CD4-positive, alpha-beta T cell (primary cell): ENCODE measurements at regions of chrX and their contacts with region 1.

Region 1: GRCh38 chrX:48676106-48676892 is 7.3 kb upstream of the WAS start:
- DNase-seq: peak; percentile 74 to 94 (median 86)
- ATAC-seq: peak; percentile 96
- H3K4me3 ChIP-seq: peak overlapping the region; percentile 79
- H3K4me3 Mint-ChIP-seq: peak overlapping the region; percentile 95
- H3K27ac ChIP-seq: peak overlapping the region; percentile 64
- H3K27ac Mint-ChIP-seq: peak overlapping the region; percentile 96
- H3K4me1 ChIP-seq: peaks cover 28% of the 10 kb centered on the region
- H3K4me1 Mint-ChIP-seq: peaks cover 18% of the 10 kb centered on the region
- H3K27me3 ChIP-seq: no peaks in the 10 kb centered on the region
- H3K27me3 Mint-ChIP-seq: no peaks in the 10 kb centered on the region
- CTCF ChIP-seq: no peak

Region 2: GRCh38 chrX:47900833-47901232 is 775.5 kb before region 1 on chrX:
- CTCF ChIA-PET with region 1: no interaction called
- POLR2A ChIA-PET with region 1: no interaction called
- intact Hi-C with region 1: no loop called
- DNase-seq: peak in 1 of 14 experiments; percentile 0
- ATAC-seq: no peak
- H3K4me3 ChIP-seq: no peak overlapping the region
- H3K4me3 Mint-ChIP-seq: no peak overlapping the region
- H3K27ac ChIP-seq: no peak overlapping the region
- H3K27ac Mint-ChIP-seq: no peak overlapping the region
- H3K4me1 ChIP-seq: no peaks in the 10 kb centered on the region
- H3K4me1 Mint-ChIP-seq: no peaks in the 10 kb centered on the region
- H3K27me3 ChIP-seq: no peaks in the 10 kb centered on the region
- H3K27me3 Mint-ChIP-seq: no peaks in the 10 kb centered on the region
- CTCF ChIP-seq: no peak

Region 3: DNA sequence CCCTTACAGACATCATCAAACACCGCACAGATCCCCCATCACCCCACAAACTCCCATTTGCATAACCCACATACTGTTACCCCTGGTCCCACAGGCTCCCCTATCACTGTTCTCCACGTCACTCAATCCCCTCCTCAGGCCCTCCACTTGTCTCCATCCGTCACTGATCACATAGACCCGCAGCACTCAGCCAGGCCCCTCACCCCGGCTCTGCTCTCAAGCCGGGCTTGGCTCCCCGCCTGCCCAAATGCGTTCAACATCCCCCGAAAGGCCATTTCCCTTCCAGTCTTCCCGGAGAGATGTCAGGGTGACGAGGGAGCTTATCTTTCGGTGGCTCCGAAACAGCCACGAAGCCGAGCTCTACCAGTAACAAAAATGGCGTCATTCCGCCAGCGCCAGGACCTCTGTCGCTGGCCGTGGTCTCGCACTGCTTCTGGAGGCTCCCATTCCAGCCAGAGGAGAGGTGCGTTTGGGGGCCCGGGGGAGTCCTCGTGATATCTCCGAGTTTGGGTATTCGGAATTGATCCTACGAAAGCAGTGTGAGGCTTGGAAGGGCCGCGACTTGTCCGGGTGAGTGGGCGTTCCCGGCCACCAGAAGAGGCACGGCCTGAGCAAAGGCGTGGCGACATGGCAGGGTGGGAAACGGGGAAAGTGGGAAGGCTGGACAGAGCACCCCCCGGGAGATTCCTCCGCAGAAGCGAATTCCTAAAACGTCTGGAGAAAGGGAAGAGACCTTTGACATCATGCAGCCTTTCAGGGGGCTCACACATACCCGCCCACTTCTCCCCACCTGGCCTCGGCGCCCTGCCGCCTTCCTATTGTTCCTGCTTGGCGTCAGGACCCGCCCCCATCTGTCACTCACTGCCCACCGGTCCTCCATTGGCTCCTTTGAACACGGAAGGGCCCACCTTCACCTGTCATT is 605.0 kb before region 1 on chrX and contains the start of gene ZNF630:
- CTCF ChIA-PET with region 1: no interaction called
- POLR2A ChIA-PET with region 1: no interaction called
- intact Hi-C with region 1: loop called in 1 of 2 experiments (anchors 5 kb)
- DNase-seq: peak; percentile 15 to 77 (median 51)
- ATAC-seq: peak; percentile 80
- H3K4me3 ChIP-seq: peak within 1 kb of the TSS; percentile 88
- H3K4me3 Mint-ChIP-seq: peak within 1 kb of the TSS; percentile 94
- H3K27ac ChIP-seq: peak within 1 kb of the TSS; percentile 40 to 76
- H3K27ac Mint-ChIP-seq: peak within 1 kb of the TSS; percentile 92
- H3K4me1 ChIP-seq: peaks cover 12% of the 10 kb centered on the region
- H3K4me1 Mint-ChIP-seq: peaks cover 20% of the 10 kb centered on the region
- H3K27me3 ChIP-seq: no peaks in the 10 kb centered on the region
- H3K27me3 Mint-ChIP-seq: no peaks in the 10 kb centered on the region
- CTCF ChIP-seq: no peak
- total RNA-seq, gene ZNF630: 1.2 to 1.9 TPM

Region 4: DNA sequence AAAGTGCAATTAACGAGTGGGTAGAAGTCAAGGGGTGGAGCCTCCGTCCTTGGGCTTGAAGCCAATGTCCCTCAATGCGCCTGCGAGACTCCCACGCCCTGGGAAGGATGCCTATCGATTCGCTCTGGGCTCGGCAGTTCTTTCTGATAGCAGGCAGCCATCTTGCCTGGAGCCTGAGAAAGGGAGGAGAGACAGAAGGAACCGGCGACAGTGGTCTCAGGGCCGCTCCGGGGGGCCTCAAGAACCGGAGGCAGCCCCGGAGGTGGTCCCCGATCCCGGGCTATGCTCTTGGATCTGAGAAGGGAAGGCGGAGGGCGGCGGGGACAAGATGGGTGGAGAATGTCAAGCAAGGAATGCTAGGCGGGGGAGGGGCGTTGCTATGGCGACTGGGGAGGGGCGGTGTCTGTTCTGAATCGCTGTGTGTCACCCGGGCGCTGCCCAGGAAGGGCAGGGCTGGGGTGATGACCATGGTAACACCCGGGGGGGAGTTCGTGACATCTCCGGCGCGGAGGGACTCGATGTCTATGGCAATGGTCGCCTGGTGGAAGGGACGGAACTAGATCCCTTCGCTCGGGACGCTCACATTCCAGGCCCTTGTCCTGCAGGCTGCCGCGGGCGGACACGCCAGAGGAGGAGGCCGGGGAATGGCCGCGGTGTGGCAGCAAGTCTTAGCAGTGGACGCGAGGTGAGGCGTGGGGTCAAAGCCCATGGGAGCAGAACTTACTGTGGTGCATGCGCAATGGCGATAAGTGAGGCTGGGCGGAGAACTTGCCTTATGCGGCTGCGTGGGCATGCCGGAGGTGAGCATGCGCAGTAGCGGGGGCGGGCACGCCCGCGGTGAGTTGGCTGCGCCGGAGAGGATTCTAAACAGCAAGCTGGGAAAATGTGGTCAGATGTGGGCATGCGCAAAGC is 78.7 kb before region 1 on chrX and contains the start of gene WDR13:
- CTCF ChIA-PET with region 1: no interaction called
- POLR2A ChIA-PET with region 1: no interaction called
- intact Hi-C with region 1: loop called in 1 of 2 experiments (anchors 2 kb)
- DNase-seq: peak; percentile 81 to 95 (median 90)
- ATAC-seq: peak; percentile 81
- H3K4me3 ChIP-seq: peak within 1 kb of the TSS; percentile 90
- H3K4me3 Mint-ChIP-seq: peak within 1 kb of the TSS; percentile 98
- H3K27ac ChIP-seq: peak within 1 kb of the TSS; percentile 96 to 99
- H3K27ac Mint-ChIP-seq: peak within 1 kb of the TSS; percentile 100
- H3K4me1 ChIP-seq: peaks cover 19% of the 10 kb centered on the region
- H3K4me1 Mint-ChIP-seq: peaks cover 15% of the 10 kb centered on the region
- H3K27me3 ChIP-seq: no peaks in the 10 kb centered on the region
- H3K27me3 Mint-ChIP-seq: no peaks in the 10 kb centered on the region
- CTCF ChIP-seq: no peak
- total RNA-seq, gene WDR13: 37.9 to 43.4 TPM

Region 5: GRCh38 chrX:48665991-48666390 is 10.3 kb before region 1 on chrX:
- CTCF ChIA-PET with region 1: no interaction called
- POLR2A ChIA-PET with region 1: no interaction called
- intact Hi-C with region 1: no loop called
- DNase-seq: no peak
- ATAC-seq: no peak
- H3K4me3 ChIP-seq: no peak overlapping the region
- H3K4me3 Mint-ChIP-seq: no peak overlapping the region
- H3K27ac ChIP-seq: no peak overlapping the region
- H3K27ac Mint-ChIP-seq: no peak overlapping the region
- H3K4me1 ChIP-seq: peaks cover under 1% of the 10 kb centered on the region
- H3K4me1 Mint-ChIP-seq: peaks cover 7% of the 10 kb centered on the region
- H3K27me3 ChIP-seq: no peaks in the 10 kb centered on the region
- H3K27me3 Mint-ChIP-seq: no peaks in the 10 kb centered on the region
- CTCF ChIP-seq: no peak

Region 6: DNA sequence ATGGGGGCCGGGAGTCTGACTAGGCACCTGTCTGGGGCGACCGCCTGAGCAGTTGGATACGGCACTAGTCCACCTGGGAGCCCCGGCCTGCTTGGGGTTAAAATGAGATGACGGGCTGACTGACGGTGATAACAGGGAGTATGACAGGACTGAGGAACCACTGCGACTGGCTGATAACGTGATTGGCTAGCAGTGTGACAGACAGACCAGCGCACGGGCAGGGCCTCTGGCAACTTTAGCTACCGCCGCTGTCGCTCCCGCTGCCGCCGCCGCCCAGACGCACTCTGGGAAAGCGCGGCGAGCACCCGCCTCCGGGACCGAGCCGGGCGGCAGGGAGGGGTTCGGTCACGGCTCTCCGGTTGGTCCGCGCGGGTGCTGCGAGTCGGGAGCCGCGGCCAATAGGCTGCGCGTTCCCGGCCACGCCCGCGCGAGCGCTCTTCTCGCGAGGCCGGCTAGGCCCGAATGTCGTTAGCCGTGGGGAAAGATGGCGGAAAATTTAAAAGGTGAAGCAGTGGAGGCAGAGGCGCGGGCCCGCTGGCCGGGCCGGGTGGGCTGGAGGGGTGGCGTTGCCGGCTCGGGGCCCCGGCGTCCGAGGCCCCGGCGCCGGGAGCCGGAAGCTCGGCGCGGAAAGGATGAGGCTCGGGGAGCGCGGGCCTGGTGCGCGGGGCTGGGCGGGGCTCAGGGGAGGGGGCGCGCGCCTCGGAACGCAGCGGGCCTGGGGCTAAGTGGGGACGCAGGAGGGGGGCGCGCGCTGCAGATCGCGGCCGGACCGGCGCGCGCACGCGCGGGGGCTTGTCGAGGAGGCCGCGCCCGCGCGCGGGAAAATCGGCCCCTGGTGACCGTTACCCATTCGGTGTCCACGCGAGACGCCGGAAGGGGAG is 20.2 kb after region 1 on chrX and contains the start of gene SUV39H1:
- CTCF ChIA-PET with region 1: no interaction called
- POLR2A ChIA-PET with region 1: interaction called, 11 read pairs
- intact Hi-C with region 1: no loop called
- DNase-seq: peak; percentile 66 to 95 (median 80)
- ATAC-seq: peak; percentile 93
- H3K4me3 ChIP-seq: peak within 1 kb of the TSS; percentile 65
- H3K4me3 Mint-ChIP-seq: peak within 1 kb of the TSS; percentile 98
- H3K27ac ChIP-seq: peak within 1 kb of the TSS; percentile 72 to 75
- H3K27ac Mint-ChIP-seq: peak within 1 kb of the TSS; percentile 98
- H3K4me1 ChIP-seq: peaks cover 17% of the 10 kb centered on the region
- H3K4me1 Mint-ChIP-seq: peaks cover 24% of the 10 kb centered on the region
- H3K27me3 ChIP-seq: no peaks in the 10 kb centered on the region
- H3K27me3 Mint-ChIP-seq: no peaks in the 10 kb centered on the region
- CTCF ChIP-seq: no peak
- total RNA-seq, gene SUV39H1: 7.7 to 8.4 TPM

Region 7: DNA sequence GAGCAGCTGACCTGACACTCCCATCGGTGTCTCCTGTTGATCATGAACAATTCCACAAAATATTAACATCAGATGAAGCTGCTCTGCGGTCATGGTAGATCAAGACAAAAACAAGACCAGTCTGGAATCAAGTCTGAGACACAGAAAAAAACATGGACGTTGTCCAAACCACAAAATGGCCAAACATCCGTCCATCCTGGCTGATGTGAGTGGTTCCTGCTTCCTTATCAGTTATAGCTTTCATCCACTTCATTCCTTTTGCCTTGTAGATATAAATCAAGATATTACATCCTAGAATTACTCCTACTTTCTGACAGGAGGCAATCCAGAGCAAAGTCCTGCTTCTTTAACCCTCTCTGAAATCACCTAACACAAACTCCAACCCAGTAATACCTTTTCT is 187.9 kb after region 1 on chrX:
- CTCF ChIA-PET with region 1: no interaction called
- POLR2A ChIA-PET with region 1: no interaction called
- intact Hi-C with region 1: no loop called
- DNase-seq: no peak
- ATAC-seq: no peak
- H3K4me3 ChIP-seq: no peak overlapping the region
- H3K4me3 Mint-ChIP-seq: no peak overlapping the region
- H3K27ac ChIP-seq: no peak overlapping the region
- H3K27ac Mint-ChIP-seq: no peak overlapping the region
- H3K4me1 ChIP-seq: no peaks in the 10 kb centered on the region
- H3K4me1 Mint-ChIP-seq: no peaks in the 10 kb centered on the region
- H3K27me3 ChIP-seq: no peaks in the 10 kb centered on the region
- H3K27me3 Mint-ChIP-seq: peaks cover 7% of the 10 kb centered on the region
- CTCF ChIP-seq: no peak

Region 8: DNA sequence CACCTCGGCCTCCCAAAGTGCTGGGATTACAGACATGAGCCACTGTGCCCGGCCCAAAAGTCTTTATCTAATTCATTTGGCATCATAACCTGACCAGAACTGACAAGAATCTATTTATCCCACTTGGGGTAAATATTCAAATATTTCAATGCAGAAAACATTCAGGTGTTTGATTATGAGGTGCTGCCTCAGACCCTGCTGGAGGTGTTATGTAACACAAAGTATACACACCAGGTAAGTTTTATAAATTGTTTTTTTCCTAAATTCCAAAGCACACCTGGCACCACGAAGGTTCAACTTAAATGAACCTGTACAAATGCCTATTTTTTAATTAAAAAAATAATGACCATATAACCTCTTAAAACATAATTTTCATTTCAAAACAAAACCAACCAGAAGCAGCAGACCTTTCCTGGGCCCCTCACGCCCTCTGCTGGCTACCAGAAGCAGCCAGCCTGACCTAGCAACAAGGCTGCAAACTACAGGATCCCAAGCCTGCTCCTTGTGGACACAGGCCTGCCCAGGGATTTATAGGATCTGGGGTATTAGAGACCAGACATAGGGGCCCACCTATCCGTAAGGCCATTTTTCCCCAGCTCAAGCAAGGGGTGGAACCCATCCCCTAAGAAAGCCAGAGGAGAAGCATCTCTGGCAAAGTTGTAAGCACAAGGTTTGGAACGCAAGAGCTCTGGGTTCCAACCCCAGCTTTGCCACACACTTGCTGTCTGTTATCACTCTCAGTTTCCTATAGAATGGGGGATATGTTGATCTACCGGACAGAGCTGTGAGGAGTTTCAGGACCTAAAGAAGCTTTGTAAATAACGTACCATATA is 269.4 kb after region 1 on chrX:
- CTCF ChIA-PET with region 1: no interaction called
- POLR2A ChIA-PET with region 1: no interaction called
- intact Hi-C with region 1: no loop called
- DNase-seq: peak; percentile 30 to 75 (median 52)
- ATAC-seq: peak; percentile 67
- H3K4me3 ChIP-seq: no peak overlapping the region
- H3K4me3 Mint-ChIP-seq: no peak overlapping the region
- H3K27ac ChIP-seq: peak overlapping the region in 1 of 2 donors; percentile 22
- H3K27ac Mint-ChIP-seq: peak overlapping the region; percentile 74
- H3K4me1 ChIP-seq: peaks cover 74% of the 10 kb centered on the region
- H3K4me1 Mint-ChIP-seq: peaks cover 49% of the 10 kb centered on the region
- H3K27me3 ChIP-seq: no peaks in the 10 kb centered on the region
- H3K27me3 Mint-ChIP-seq: no peaks in the 10 kb centered on the region
- CTCF ChIP-seq: peak; percentile 71

Region 9: DNA sequence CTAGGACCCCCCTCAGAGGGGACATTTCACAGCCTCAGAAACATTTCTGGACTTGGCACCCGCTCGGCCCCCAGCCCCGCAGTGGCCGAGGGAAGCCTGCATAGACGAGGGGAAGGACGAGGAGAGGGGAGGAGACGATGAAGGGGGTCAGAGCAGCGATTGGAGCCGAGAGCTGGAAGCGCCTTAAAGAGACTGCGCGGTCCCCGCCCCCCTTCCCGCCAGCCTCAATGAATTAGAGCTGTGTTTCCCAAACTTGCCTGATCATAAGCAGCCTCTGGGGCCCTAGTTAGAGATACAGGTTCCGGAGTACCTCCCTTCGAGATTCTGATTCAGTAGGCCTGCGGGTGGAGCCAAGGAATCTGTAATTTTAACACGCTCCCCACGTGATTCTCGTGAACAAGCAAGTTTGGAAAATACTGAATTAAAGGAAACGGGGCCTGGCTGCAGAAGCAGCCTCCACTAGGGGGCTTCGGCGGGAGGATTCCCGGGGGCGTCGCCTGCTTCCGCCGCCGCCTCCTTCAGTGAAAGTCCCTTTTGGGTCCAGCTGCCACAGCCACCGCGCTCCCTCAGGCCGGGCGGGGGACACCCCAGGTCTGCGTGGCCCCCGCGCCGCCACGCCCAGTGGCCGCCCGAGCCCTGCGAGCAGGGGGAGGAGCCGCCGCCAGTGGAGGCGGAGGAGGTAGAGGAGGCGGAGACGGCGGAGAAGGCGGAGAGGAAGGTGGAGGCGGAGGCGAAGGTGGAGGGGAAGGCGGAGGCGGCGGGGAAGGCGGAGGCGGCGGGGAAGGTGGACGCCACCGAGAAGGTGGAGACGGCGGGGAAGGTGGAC is 1202.7 kb after region 1 on chrX and contains the start of gene USP27X:
- CTCF ChIA-PET with region 1: no interaction called
- POLR2A ChIA-PET with region 1: no interaction called
- intact Hi-C with region 1: loop called in 1 of 2 experiments (anchors 5 kb)
- DNase-seq: peak; percentile 63 to 93 (median 76)
- ATAC-seq: peak; percentile 88
- H3K4me3 ChIP-seq: peak within 1 kb of the TSS; percentile 64
- H3K4me3 Mint-ChIP-seq: peak within 1 kb of the TSS; percentile 89
- H3K27ac ChIP-seq: peak within 1 kb of the TSS; percentile 46 to 62
- H3K27ac Mint-ChIP-seq: peak within 1 kb of the TSS; percentile 89
- H3K4me1 ChIP-seq: peaks cover 32% of the 10 kb centered on the region
- H3K4me1 Mint-ChIP-seq: peaks cover 30% of the 10 kb centered on the region
- H3K27me3 ChIP-seq: no peaks in the 10 kb centered on the region
- H3K27me3 Mint-ChIP-seq: no peaks in the 10 kb centered on the region
- CTCF ChIP-seq: peak; percentile 32
- total RNA-seq, gene USP27X: 2.7 to 3.2 TPM